CD8-positive, alpha-beta T cell (primary cell): ENCODE measurements at regions of chr4 and their contacts with region 1.

Region 1: GRCh38 chr4:46986922-46987638 is 6.3 kb downstream of the GABRA4 start:
- DNase-seq: no peak
- ATAC-seq: no peak
- H3K4me3 ChIP-seq: no peak overlapping the region
- H3K4me3 Mint-ChIP-seq: no peak overlapping the region
- H3K27ac ChIP-seq: no peak overlapping the region
- H3K27ac Mint-ChIP-seq: no peak overlapping the region
- H3K4me1 ChIP-seq: no peaks in the 10 kb centered on the region
- H3K4me1 Mint-ChIP-seq: peaks cover 1% of the 10 kb centered on the region
- H3K27me3 ChIP-seq: peaks cover 0 to 2% of the 10 kb centered on the region in 2 experiments
- H3K27me3 Mint-ChIP-seq: peaks cover 13% of the 10 kb centered on the region
- CTCF ChIP-seq: no peak

Region 2: DNA sequence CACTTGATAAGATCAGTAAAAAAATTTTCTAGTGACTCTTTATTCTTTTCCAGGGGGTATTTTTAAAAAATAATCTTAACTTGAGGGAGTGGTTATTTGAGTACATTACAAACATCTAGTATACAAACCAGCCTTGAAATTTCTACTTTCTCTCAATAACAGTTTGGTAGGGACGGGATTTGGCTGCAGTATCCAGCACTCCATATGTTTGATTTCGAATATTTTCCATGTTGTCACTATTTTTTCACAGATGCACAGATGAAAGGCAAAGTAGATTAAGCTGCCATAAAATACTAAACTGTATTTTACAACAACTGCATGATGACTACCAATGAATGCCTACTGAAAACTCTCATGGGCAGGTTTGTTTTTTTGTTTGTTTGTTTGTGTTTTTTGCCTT is 303.0 kb before region 1 on chr4:
- CTCF ChIA-PET with region 1: no interaction called
- POLR2A ChIA-PET with region 1: no interaction called
- intact Hi-C with region 1: no loop called
- DNase-seq: no peak
- ATAC-seq: no peak
- H3K4me3 ChIP-seq: no peak overlapping the region
- H3K4me3 Mint-ChIP-seq: no peak overlapping the region
- H3K27ac ChIP-seq: no peak overlapping the region
- H3K27ac Mint-ChIP-seq: no peak overlapping the region
- H3K4me1 ChIP-seq: no peaks in the 10 kb centered on the region
- H3K4me1 Mint-ChIP-seq: no peaks in the 10 kb centered on the region
- H3K27me3 ChIP-seq: no peaks in the 10 kb centered on the region
- H3K27me3 Mint-ChIP-seq: no peaks in the 10 kb centered on the region
- CTCF ChIP-seq: no peak

Region 3: GRCh38 chr4:47049347-47049746 is 62.3 kb after region 1 on chr4:
- CTCF ChIA-PET with region 1: no interaction called
- POLR2A ChIA-PET with region 1: no interaction called
- intact Hi-C with region 1: loop called in 1 of 2 experiments (anchors 10 kb)
- DNase-seq: no peak
- ATAC-seq: no peak
- H3K4me3 ChIP-seq: no peak overlapping the region
- H3K4me3 Mint-ChIP-seq: no peak overlapping the region
- H3K27ac ChIP-seq: no peak overlapping the region
- H3K27ac Mint-ChIP-seq: no peak overlapping the region
- H3K4me1 ChIP-seq: no peaks in the 10 kb centered on the region
- H3K4me1 Mint-ChIP-seq: no peaks in the 10 kb centered on the region
- H3K27me3 ChIP-seq: peaks cover 0 to 8% of the 10 kb centered on the region in 2 experiments
- H3K27me3 Mint-ChIP-seq: peaks cover 31% of the 10 kb centered on the region
- CTCF ChIP-seq: no peak